Activated naive CD4-positive, alpha-beta T cell treated with anti-CD3 and anti-CD28 coated beads, Interleukin-2, amount 10 ng/mL, durations not matched to agents 7 days and 5 days (primary cell): ENCODE measurements at regions of chr18 and their contacts with region 1.

Region 1: DNA sequence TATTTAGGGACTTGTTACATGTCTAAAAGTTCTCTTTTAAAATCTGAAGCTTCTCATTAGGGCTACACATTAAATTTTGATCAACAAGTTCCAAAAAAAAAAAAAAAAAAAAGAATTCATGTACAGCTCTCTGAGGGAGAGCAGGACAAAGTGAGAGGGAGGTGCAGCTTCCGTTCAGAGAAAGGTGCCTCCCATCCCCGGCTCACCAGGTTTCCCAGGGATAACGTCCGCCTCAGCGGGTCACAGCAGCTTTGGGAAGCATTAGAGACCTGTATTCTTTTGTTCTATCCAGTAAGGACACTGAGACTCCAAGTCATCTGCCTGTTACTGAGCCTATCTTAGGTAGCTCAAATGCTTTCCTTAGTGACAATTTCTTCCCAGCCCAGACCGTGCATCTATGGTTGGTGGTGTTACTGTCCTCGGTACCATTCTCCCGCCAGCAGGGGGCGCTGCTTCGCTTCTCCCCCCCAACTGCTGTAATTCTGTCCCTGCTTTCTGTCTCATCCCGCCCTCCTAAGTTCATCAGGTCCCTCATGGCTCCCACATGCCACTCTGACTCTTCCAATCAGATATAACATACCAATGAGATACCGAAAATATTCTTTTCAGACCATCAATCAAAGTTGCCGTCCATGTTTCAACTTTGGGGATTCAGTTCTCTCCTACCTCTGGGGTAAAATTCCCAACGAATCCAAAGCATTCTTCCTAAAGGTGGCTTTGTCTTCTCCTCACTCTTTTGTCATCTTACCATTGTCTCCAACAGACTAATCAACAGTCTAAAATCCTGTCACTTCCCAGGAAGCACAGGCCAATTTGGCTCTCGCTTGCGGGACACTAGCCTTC is 466.5 kb downstream of the METTL4 start:
- DNase-seq: peak; percentile 66
- H3K4me3 Mint-ChIP-seq: no peak overlapping the region
- H3K27ac Mint-ChIP-seq: no peak overlapping the region
- H3K4me1 Mint-ChIP-seq: no peaks in the 10 kb centered on the region
- H3K27me3 Mint-ChIP-seq: peaks cover 6% of the 10 kb centered on the region

Region 2: GRCh38 chr18:1751243-1751642 is 353.6 kb before region 1 on chr18:
- CTCF ChIA-PET with region 1: no interaction called
- DNase-seq: no peak
- H3K4me3 Mint-ChIP-seq: no peak overlapping the region
- H3K27ac Mint-ChIP-seq: no peak overlapping the region
- H3K4me1 Mint-ChIP-seq: no peaks in the 10 kb centered on the region
- H3K27me3 Mint-ChIP-seq: no peaks in the 10 kb centered on the region

Region 3: DNA sequence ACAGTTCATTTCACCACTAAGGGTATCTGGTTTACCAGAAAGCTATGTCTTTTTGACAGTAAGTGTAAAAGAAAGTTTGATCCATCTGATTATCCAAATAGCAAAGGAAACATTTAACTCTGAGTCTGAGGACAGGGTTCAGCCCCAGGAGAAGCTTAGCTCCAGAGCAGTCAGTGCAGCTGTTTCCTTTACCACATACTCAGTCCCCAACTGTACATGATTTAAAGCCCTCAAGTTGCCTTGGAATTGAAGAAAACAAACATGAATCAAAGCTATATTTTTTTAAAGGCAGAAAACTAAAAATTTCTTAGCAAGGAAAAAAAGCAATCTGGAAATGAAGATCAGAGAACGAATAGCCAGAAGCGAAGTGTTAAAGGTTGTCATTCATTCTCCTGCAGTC is 279.5 kb before region 1 on chr18:
- CTCF ChIA-PET with region 1: no interaction called
- DNase-seq: no peak
- H3K4me3 Mint-ChIP-seq: no peak overlapping the region
- H3K27ac Mint-ChIP-seq: no peak overlapping the region
- H3K4me1 Mint-ChIP-seq: no peaks in the 10 kb centered on the region
- H3K27me3 Mint-ChIP-seq: no peaks in the 10 kb centered on the region

Region 4: GRCh38 chr18:2002151-2002550 is 102.7 kb before region 1 on chr18:
- CTCF ChIA-PET with region 1: no interaction called
- DNase-seq: no peak
- H3K4me3 Mint-ChIP-seq: no peak overlapping the region
- H3K27ac Mint-ChIP-seq: no peak overlapping the region
- H3K4me1 Mint-ChIP-seq: no peaks in the 10 kb centered on the region
- H3K27me3 Mint-ChIP-seq: no peaks in the 10 kb centered on the region

Region 5: DNA sequence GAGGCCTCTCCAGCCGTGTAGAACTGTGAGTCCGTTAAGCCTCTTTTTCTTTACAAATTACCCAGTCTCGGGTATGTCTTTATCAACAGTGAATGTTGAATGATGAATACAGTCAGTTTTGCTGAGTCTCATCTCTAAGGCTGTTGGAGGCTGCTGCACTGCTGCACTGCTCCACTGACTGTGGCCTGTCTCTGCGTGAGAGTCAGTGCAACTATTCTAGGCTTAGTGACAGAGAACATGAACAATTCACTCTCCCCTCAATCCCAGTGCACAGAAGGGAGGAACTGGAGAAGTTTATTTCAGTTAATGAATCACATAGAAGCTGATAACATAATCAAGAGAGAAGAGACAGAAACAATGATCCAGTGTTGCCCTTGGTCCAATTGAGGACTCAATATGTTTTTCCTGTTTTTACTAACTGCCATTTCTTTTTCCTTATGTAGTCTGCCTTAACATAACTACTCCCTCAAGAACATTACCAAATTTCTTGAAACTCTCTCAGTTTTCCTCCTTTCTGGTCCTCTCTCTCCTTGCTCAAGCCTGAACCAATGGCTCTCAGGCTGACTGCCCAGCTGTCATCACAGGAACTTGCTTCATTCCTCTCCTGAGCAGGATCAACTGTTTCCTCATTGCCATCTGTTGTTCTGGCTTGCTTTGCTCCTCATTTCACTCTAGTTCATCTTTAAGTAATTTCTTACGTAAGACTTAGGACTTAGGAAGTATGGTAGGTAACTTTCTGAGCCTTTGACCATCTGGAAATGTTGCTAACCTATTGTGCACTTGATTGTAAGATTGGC is 16.8 kb before region 1 on chr18:
- CTCF ChIA-PET with region 1: interaction called, 18 read pairs
- DNase-seq: no peak
- H3K4me3 Mint-ChIP-seq: no peak overlapping the region
- H3K27ac Mint-ChIP-seq: no peak overlapping the region
- H3K4me1 Mint-ChIP-seq: peaks cover 4% of the 10 kb centered on the region
- H3K27me3 Mint-ChIP-seq: peaks cover 1% of the 10 kb centered on the region

Region 6: DNA sequence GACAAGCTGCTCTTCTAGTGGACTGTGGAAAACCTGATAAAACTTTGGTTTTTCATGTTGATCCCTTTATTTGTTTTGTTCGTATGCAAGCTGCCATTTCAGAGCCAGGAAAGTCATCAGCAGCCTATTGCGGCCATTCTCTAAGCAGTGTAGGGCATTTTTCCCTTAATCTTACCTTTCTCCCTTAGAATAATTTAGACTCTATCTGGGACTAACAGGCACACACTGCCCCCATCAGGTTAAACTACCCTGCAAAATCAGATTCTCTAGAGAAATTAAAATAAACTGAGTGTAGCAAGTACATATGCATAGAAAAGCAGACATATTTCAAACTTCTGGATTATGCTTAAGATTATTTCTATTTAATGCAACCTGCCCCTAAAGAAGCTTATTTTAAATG is 119.0 kb after region 1 on chr18:
- CTCF ChIA-PET with region 1: interaction called, 12 read pairs
- DNase-seq: peak; percentile 21
- H3K4me3 Mint-ChIP-seq: no peak overlapping the region
- H3K27ac Mint-ChIP-seq: no peak overlapping the region
- H3K4me1 Mint-ChIP-seq: no peaks in the 10 kb centered on the region
- H3K27me3 Mint-ChIP-seq: no peaks in the 10 kb centered on the region